ENCODE measurements at regions of chr21 and their contacts with region 1.

Region 1: DNA sequence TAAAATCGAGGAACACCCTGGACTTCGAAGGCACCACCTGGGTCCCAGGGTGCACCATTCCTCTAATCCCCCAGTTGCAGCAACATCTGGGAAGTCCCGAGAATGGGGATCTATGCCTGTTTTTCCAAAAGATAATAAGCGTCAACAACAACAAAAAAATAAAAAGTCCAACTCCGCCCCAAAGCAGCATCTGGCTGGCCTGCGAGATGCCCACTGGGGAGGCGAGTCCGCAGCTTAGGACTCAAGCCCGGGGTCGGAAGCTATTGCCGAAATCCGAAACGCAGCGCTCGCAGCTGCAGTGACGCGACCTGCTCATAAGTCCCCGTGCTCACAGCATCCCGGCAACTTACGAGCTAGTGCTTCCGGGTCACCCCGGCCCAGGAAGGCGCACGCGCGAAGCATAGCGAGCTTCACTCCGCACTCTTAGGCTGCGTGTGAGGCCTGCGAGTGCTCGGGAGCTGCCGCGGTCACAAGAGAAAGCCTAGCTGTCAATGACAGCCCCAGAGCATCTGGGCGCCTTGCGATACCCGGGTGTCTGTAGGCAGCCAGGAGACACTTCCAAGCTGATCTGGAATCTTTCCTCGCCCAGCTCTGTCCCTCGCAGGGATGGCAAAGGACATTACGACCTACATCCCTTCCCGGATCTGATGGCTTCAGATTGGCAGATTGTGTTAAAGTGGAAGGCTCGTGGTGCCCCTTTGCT is 9.9 kb upstream of the LTN1 start:
- DNase-seq: peak; percentile 92
- ATAC-seq: peak; percentile 98
- H3K4me3 ChIP-seq: peak overlapping the region; percentile 57 to 86
- H3K27ac ChIP-seq: peak overlapping the region; percentile 95
- H3K4me1 ChIP-seq: peaks cover 0 to 24% of the 10 kb centered on the region in 2 experiments; a peak in 2 of 4 replicates
- H3K27me3 ChIP-seq: no peaks in the 10 kb centered on the region
- CTCF ChIP-seq: no peak
- POLR2A ChIP-seq: peak; percentile 98
- RAD21 ChIP-seq: no peak

Region 2: GRCh38 chr21:29018540-29018939 is 15.9 kb after region 1 on chr21:
- CTCF ChIA-PET with region 1: no interaction called
- POLR2A ChIA-PET with region 1: interaction called, 39 read pairs
- RAD21 ChIA-PET with region 1: no interaction called
- intact Hi-C with region 1: no loop called
- DNase-seq: no peak
- ATAC-seq: peak; percentile 21
- H3K4me3 ChIP-seq: peak overlapping the region; percentile 86 to 91
- H3K27ac ChIP-seq: peak overlapping the region; percentile 85
- H3K4me1 ChIP-seq: peaks cover 4 to 32% of the 10 kb centered on the region in 2 experiments; a peak in 3 of 4 replicates
- H3K27me3 ChIP-seq: no peaks in the 10 kb centered on the region
- CTCF ChIP-seq: no peak
- POLR2A ChIP-seq: peak; percentile 0
- RAD21 ChIP-seq: no peak